Psoas muscle (tissue), 8 donors: ENCODE measurements at regions of chr10 and their contacts with region 1.

Region 1: DNA sequence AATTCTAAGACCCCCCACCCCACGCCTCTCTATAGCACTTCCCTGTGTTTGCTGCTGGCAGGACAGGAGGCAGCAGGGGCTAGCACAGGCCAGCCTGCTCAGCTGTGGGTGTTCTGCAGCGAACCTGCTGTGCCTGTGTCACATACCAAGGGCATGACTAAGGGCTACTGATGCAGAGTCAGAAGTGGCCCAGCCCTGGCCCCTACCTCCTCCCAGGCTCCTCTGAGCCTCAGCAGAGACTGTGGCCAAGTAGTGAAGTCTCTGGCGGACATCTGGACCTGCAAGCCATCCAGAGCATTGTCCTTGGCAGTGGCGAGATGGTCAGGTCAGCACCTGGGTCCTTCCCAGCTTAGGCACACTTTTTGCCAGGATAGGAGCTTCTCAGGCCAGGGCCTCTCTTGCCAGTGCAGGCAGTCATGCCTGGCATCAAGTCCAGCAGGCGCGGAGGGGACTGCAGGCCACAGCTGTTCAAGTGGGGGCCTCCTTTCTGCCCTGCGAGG is 116.3 kb upstream of the RET start:
- DNase-seq: peak in 1 of 2 donors; percentile 69
- ATAC-seq: peak; percentile 88 to 93 (median 90)
- H3K4me3 ChIP-seq: no peak overlapping the region
- H3K27ac ChIP-seq: peak overlapping the region; percentile 50
- H3K4me1 ChIP-seq: no peaks in the 10 kb centered on the region
- H3K27me3 ChIP-seq: no peaks in the 10 kb centered on the region
- CTCF ChIP-seq: no peak

Region 2: GRCh38 chr10:42422911-42423310 is 537.6 kb before region 1 on chr10:
- intact Hi-C with region 1: no loop called
- DNase-seq: no peak
- ATAC-seq: no peak
- H3K4me3 ChIP-seq: no peak overlapping the region
- H3K27ac ChIP-seq: no peak overlapping the region
- H3K4me1 ChIP-seq: no peaks in the 10 kb centered on the region
- H3K27me3 ChIP-seq: no peaks in the 10 kb centered on the region
- CTCF ChIP-seq: no peak

Region 3: GRCh38 chr10:43229208-43230061 is 268.9 kb after region 1 on chr10:
- intact Hi-C with region 1: no loop called
- DNase-seq: peak; percentile 22 to 52
- ATAC-seq: peak; percentile 24 to 50 (median 34)
- H3K4me3 ChIP-seq: peak overlapping the region; percentile 53
- H3K27ac ChIP-seq: no peak overlapping the region
- H3K4me1 ChIP-seq: no peaks in the 10 kb centered on the region
- H3K27me3 ChIP-seq: peaks cover 0 to 36% (median 4%) of the 10 kb centered on the region in 3 donors
- CTCF ChIP-seq: no peak

Region 4: DNA sequence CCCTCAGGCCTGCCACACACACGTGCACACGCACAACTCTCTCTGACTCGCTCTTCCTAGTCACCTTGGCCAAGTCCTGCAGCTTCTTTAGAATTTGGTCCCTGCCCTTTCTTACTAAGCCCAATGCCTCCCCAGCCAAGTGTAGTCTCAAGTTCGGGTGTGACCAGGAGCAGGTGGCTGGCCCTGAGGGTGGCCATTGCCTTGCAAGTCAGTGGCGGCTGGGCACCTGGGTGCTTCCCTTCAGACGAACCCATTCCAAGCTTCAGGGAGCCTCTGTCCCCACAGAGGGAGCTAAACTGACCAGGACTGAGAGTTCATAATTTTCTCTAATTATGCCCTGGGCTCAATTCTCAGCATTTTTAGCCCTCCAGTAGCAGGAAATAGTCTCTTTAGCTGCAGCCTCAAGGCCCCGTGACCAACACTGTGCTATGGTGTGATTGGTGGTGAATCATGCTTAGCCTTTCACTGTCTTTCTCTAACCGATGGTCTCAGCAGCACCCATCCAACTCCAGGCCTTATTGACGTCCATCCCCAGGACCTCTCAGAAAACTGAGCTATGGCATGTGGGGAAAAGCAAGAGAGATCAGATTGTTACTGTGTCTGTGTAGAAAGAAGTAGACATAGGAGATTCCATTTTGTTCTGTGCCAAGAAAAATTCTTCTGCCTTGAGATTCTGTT is 376.2 kb after region 1 on chr10:
- intact Hi-C with region 1: loop called in 1 of 2 experiments (anchors 10 kb)
- DNase-seq: no peak
- ATAC-seq: no peak
- H3K4me3 ChIP-seq: no peak overlapping the region
- H3K27ac ChIP-seq: no peak overlapping the region
- H3K4me1 ChIP-seq: no peaks in the 10 kb centered on the region
- H3K27me3 ChIP-seq: peaks cover 0 to 19% (median 4%) of the 10 kb centered on the region in 3 donors
- CTCF ChIP-seq: no peak